ENCODE measurements at regions of chr22 and their contacts with region 1.

Region 1: DNA sequence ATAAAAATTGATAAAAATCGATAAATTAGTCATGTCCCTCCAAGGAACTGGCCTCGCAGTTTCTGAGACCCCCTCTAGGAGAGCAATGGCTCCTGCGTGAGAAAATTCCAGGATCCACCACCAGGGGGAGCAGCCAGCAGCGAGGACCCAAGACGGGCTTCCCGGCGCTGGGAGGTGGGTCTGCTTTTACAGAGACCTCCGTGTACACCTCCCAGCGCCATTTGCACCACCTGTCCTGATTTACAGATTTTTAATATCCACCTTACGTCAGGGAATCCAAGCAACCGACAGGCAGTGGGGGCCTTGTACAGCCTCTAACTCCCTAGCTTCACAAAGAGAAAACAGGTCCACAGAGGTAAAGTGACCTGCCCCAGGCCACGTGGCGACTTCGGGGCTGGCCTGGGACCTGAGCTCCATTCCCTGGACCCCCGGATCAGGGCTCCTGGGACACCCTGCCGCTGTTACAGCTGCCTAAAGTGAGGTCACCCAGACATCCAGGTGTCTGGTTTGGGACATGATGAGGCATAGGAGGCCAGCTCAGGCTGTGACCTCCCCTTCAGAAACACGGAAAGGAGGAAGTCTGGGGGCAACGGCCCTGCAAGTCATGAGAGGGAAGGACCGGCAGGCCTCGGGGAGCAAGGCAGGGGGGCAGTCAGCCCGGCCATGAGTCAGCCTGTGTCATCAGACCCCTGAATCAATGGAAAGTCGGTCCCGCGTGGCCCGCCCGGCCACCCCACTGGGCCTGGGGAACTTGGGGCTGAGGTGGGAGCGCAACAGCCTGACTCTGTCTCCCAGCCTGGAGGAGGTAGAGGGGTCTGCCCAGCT is 3.5 kb downstream of the OSM start:
- DNase-seq: peak; percentile 81
- H3K4me3 Mint-ChIP-seq: peak overlapping the region; percentile 99
- H3K27ac Mint-ChIP-seq: peak overlapping the region; percentile 80
- H3K4me1 Mint-ChIP-seq: peaks cover 62% of the 10 kb centered on the region
- H3K27me3 Mint-ChIP-seq: no peaks in the 10 kb centered on the region

Region 2: GRCh38 chr22:30234786-30235470 is 28.2 kb before region 1 on chr22:
- CTCF ChIA-PET with region 1: no interaction called
- POLR2A ChIA-PET with region 1: no interaction called
- DNase-seq: no peak
- H3K4me3 Mint-ChIP-seq: no peak overlapping the region
- H3K27ac Mint-ChIP-seq: no peak overlapping the region
- H3K4me1 Mint-ChIP-seq: peaks cover 17% of the 10 kb centered on the region
- H3K27me3 Mint-ChIP-seq: no peaks in the 10 kb centered on the region

Region 3: DNA sequence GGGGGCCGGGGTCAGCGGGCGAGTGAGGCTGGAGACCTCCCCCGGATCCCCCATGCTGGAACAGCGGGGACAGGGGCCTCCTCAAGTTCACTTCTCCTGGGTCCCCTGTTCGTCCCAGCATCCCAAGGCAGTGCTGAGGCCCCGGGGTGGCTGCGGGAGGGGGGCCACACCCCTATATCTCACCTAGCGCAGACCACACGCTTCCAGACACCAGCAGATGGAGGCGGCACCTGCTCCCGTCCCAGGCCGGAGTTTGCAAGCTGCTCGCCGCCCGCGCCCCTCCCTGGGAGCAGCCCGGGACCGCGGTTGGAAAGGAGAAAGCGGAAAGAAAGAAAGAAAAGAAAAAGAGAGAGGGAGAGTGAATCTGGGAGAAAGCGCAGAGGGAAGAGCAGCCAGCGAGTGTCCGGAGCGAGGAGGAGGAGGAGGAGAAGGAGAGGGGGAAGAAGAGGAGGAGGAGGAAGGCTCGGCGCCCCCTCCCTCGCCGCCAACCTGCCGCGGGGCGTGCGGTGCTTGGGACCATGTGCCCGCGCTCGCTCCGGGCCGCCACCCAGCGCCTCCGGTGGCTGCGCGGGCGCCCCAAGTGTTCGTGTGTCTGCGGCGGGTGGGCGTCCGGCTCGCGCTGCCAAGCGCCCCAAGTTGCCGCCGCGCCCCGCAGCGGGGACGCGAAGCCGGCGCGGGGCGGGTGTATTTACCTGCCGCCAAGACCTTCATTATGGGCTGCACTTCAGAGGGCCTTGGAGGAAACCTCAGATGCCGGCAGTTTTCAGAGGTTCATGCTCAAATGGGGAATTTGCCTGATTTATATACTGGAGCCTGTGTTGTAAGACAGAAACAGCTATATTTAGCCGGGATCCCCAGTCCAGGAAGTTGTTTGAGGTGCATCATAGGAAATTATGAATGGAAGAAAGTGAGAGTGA is 16.9 kb before region 1 on chr22 and contains the start of gene LIF:
- CTCF ChIA-PET with region 1: interaction called, 5 read pairs
- POLR2A ChIA-PET with region 1: interaction called, 16 read pairs
- DNase-seq: peak; percentile 67
- H3K4me3 Mint-ChIP-seq: peak within 1 kb of the TSS; percentile 95
- H3K27ac Mint-ChIP-seq: peak within 1 kb of the TSS; percentile 91
- H3K4me1 Mint-ChIP-seq: peaks cover 78% of the 10 kb centered on the region
- H3K27me3 Mint-ChIP-seq: no peaks in the 10 kb centered on the region
- total RNA-seq, gene LIF: 94.6 to 94.8 TPM

Region 4: DNA sequence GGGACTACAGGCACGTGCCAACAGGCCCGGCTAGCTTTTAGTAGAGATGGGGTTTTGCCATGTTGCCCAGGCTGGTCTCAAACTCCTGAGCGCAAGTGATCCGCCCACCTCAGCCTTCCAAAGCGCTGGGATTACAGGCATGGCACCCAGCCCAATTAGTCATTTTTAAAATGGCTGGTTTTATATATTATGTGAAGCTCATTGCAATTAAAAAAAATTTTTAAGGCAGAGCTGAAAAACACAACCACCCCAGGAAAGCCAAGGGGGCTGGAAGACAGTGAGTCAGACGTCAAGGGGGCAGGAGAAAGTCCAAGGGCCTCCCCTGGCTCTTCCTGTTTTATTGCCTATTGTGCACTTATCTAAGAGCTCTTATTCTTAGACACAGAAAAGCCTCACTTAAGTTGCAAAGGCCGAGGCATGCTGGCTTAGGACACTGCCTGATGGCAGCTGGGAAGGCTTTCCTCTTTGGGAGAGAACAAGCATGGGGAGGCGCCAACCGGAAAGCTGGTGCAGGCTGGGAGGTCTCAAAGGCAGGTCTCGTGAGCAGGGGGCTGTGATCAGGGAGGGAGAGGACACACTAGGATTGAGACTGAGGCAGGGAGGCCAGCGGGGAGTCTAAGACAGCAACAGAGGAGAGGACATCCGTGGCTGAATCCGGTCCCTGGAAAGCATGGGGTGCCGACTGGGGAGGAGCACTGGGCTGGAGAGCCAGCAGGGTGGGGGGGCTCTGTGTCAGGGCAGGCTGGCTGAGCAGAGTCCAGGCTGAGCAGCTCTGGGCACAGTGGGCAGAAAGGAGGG is 14.6 kb after region 1 on chr22:
- CTCF ChIA-PET with region 1: interaction called, 36 read pairs
- POLR2A ChIA-PET with region 1: interaction called, 253 read pairs
- DNase-seq: no peak
- H3K4me3 Mint-ChIP-seq: no peak overlapping the region
- H3K27ac Mint-ChIP-seq: no peak overlapping the region
- H3K4me1 Mint-ChIP-seq: peaks cover 78% of the 10 kb centered on the region
- H3K27me3 Mint-ChIP-seq: no peaks in the 10 kb centered on the region

Region 5: DNA sequence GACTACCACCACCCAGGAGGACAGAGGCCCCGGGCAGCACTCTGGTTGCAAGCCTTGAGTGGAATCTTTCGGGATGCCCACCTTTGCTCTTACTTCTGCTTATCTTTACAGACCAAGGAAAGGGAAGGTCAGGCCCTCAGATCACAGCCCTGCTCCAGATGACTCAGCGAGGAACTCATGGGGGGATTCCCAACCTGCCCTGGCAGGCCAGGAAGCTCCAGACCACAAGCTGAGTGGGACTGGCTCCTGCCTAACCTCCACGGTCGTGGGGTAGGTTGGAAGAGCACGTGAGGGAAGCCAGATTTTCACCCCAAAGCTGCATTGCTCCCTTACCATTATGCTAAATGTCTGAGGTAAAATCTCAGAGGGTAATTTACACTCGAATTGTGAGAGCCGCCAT is 51.8 kb after region 1 on chr22:
- CTCF ChIA-PET with region 1: no interaction called
- POLR2A ChIA-PET with region 1: no interaction called
- DNase-seq: peak; percentile 38
- H3K4me3 Mint-ChIP-seq: no peak overlapping the region
- H3K27ac Mint-ChIP-seq: peak overlapping the region; percentile 50
- H3K4me1 Mint-ChIP-seq: peaks cover 93% of the 10 kb centered on the region
- H3K27me3 Mint-ChIP-seq: no peaks in the 10 kb centered on the region

Measured in activated CD4-positive, alpha-beta memory T cell treated with anti-CD3 and anti-CD28 coated beads, Interleukin-2, amount 10 ng/mL, durations not matched to agents 7 days and 5 days (primary cell).